ENCODE measurements at regions of chr19 and their contacts with region 1.

Region 1: DNA sequence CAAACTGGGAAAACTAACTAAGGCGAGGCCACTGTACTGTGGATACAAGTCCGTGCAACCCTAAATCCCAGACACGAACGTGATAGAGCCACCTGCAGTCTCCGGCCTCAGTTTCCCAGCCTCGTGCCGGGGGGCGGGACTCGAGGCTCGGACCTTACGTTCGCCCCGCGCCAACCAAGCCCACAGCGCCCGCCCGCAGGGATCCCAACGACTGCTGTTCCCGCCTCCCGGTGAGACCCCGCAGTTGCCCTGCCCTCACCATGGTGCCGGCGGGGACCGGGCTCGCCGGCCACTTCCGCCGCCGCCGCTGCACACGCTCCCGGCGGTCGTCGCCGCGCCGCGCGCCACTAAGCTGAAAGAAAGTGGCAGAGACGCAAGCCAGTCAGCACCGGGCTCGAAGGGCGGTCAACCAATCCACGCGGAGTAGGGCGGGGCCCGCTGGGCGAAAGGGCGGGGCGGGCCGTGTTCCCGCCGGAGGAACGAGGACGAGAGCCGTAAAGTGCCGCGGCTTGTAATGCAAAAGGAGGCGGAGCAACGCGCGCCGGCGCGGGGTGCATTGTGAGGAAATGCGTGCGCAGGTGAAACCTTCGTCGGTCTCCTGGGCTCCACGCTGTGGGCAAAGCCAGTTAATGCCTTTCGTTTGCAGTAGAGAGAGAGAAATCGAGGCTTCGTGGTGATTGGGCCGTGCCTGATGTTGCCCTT is at the start of gene LSM4:
- DNase-seq: peak; percentile 99
- H3K4me3 ChIP-seq: peak within 1 kb of the TSS; percentile 64 to 84 (median 80)
- H3K27ac ChIP-seq: peak within 1 kb of the TSS; percentile 88 to 93 (median 92)
- H3K4me1 ChIP-seq: peaks cover 51 to 63% (median 59%) of the 10 kb centered on the region in 4 donors
- H3K27me3 ChIP-seq: no peaks in the 10 kb centered on the region
- CTCF ChIP-seq: peak in 2 of 3 experiments; percentile 23 to 33
- EP300 ChIP-seq: no peak
- POLR2A ChIP-seq: peak; percentile 66
- total RNA-seq, gene LSM4: 86.8 to 116 (median 93.9) TPM

Region 2: DNA sequence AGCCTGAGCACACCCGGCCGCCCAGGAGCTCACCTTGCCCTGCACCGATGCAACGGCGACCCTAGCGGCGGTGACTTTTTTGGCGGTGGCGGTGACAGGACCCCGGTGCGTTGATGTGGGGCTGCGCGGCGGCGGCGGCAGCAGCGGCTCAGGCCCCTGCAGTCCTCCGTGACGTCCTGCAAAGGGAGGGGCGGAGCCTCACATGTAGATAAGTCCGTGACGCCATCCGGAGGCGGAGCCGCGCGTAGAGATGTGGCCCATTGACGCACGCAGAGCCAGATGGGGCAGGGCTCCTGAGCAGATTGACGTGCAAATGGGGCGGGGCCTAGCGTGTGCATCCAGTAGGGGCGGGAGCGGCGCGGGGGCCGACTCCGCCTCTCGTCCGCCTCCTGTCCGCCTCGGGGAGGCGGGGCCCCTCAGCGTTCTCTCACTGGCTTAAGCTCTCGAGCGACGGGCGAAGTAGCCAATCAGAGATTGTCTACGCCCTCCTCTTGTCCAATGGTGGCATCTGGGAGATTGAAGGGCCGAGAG is 119.0 kb before region 1 on chr19 and contains the start of gene RAB3A:
- intact Hi-C with region 1: loop called (anchors 10 kb)
- DNase-seq: peak; percentile 100
- H3K4me3 ChIP-seq: peak within 1 kb of the TSS; percentile 69 to 79 (median 75)
- H3K27ac ChIP-seq: peak within 1 kb of the TSS; percentile 92 to 98 (median 95)
- H3K4me1 ChIP-seq: peaks cover 20 to 41% (median 37%) of the 10 kb centered on the region in 4 donors
- H3K27me3 ChIP-seq: peaks cover 0 to 2% (median 0%) of the 10 kb centered on the region in 4 donors
- CTCF ChIP-seq: peak in 1 of 3 experiments; percentile 13
- EP300 ChIP-seq: peak; percentile 92
- POLR2A ChIP-seq: no peak
- total RNA-seq, gene RAB3A: 1.7 to 2.5 (median 1.9) TPM

Region 3: DNA sequence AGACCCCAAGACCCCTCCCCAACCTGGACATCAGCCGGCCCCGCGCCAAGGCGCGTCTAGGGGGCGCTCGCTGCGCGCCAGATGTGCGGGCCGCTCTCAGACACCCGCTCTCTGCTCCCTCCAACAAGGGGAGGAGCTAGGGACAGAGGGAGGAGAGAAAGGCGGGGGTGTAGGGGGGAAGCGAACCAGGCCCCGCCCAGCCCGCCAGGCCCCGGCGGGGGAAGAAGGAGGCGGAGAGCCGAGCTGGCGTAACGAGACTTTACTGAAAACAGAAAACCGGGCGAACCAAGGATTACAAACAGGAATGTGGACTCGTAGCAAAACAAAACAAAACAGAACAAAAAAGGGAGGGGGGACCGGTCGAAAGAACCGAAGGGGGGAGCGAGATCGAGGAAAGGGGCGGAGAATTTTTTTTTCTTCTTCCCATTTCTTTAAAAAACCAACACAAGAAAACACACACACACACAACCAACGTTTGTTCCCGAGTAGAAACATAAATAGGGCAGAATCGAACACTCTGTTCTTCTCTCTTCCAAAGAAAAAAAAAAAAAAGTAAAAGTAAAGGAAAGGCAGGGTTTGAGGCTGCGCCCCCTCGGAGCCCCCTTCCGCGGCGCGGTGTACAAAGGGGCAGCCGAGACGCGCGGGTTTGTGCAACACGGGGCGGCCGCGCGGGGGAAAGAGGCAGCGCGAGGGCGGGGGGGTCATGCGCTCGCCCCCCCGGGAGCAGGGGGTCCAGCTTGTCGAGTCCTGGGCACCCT is 43.2 kb before region 1 on chr19:
- intact Hi-C with region 1: loop called (anchors 2 kb)
- DNase-seq: peak; percentile 99
- H3K4me3 ChIP-seq: peak overlapping the region; percentile 86 to 100 (median 99)
- H3K27ac ChIP-seq: peak overlapping the region; percentile 99 to 100 (median 100)
- H3K4me1 ChIP-seq: peaks cover 53 to 64% (median 63%) of the 10 kb centered on the region in 4 donors
- H3K27me3 ChIP-seq: no peaks in the 10 kb centered on the region
- CTCF ChIP-seq: peak; percentile 85 to 99 (median 90)
- EP300 ChIP-seq: no peak
- POLR2A ChIP-seq: peak; percentile 93

Region 4: DNA sequence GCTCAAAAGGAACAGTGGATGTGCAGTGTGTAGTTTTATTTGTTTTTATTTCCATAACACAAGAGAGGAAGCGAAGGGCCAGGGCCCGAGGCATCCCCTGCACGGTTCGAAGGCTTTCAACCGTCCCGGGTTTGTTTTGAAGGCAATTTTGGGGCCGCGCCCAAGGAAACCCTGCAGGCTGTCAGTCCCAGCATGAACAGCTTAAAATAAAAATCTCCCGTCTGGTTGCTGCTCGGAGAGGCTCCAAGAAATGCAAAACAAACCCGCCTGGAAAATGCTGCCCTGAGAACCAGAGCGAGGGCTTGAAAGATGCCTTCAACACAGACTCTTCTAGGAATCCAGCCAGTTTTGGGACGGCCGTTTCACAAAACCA is 16.0 kb before region 1 on chr19:
- intact Hi-C with region 1: loop called (anchors 1 kb)
- DNase-seq: no peak
- H3K4me3 ChIP-seq: peak overlapping the region; percentile 5 to 22 (median 17)
- H3K27ac ChIP-seq: peak overlapping the region; percentile 93 to 99 (median 98)
- H3K4me1 ChIP-seq: peaks cover 58 to 71% (median 64%) of the 10 kb centered on the region in 4 donors
- H3K27me3 ChIP-seq: no peaks in the 10 kb centered on the region
- CTCF ChIP-seq: no peak
- EP300 ChIP-seq: no peak
- POLR2A ChIP-seq: no peak

Region 5: DNA sequence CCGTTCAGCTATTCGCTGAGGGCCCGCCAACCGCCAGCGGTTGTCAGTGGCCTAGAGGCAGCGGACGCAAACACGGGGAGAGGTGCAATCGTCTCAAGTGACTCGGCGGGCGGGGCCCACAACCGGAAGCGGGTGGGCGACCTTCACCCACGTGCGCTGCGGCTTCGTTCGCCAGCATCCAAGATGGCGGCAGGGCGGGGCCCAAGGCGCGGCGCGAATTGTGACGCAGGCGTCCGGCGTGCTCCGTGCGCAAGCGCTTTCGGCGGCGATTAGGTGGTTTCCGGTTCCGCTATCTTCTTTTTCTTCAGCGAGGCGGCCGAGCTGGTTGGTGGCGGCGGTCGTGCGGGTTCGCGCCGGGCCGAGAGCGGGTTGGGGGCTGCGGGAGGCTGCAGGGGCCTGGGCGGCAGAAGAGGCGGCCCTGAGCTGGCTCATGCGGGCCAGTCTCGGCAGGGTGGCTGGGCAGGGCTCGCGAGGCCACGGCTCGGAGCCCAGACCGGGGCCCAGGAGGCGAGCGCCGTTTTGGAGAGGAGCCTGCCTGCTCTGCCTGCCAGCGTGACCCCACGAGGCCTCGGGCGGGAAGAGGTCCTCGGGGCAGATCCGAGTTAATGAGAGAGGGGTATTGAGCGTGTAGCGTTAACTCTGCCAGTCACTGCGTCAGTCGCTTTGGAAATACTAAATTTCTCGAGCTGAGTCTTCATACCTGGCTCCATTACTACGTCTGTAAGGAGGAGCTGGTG is 248.8 kb after region 1 on chr19 and contains the start of gene UBA52:
- intact Hi-C with region 1: no loop called
- DNase-seq: peak; percentile 100
- H3K4me3 ChIP-seq: peak within 1 kb of the TSS; percentile 76 to 96 (median 92)
- H3K27ac ChIP-seq: peak within 1 kb of the TSS; percentile 92 to 97 (median 94)
- H3K4me1 ChIP-seq: peaks cover 22 to 26% (median 24%) of the 10 kb centered on the region in 4 donors
- H3K27me3 ChIP-seq: no peaks in the 10 kb centered on the region
- CTCF ChIP-seq: peak in 1 of 3 experiments; percentile 21
- EP300 ChIP-seq: no peak
- POLR2A ChIP-seq: peak; percentile 87
- total RNA-seq, gene UBA52: 560 to 800 (median 665) TPM

Measured in esophagus muscularis mucosa (tissue), 4 donors.